Lower lobe of right lung (tissue), 2 donors: ENCODE measurements at regions of chr1 and their contacts with region 1.

Region 1: DNA sequence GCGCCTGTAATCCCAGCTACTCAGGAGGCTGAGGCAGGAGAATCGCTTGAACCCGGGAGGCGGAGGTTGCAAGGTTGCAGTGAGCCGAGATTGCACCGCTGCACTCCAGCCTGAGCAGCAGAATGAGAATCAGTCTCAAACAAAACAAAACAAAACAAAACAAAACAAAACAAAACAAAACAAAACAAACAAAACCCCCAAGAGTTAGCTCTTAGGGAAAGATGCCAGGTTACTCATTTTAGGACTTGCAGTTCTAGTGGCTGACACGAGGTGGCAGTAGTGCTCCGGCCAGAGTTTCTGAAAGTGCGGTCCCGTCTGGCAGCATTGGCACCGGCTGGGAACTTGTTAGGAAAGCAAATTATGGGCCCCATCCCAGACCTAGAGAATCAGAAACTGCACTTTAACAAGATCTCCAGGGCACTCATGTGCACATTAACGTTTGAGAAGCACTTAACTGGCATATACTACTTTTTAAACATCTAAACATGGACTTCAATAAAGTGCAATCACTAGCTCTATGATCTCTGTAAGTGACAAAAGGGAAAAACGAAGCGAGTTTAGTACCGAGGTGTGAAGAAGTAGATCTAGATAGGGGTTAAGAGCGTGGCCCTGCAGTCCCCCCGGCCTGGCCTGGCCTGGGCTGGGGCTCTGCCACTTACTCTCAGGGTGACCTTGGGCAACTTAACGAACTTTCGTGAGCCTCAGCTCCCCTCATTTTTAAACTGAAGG is 41.9 kb upstream of the TNFRSF1B start:
- DNase-seq: peak; percentile 85
- ATAC-seq: peak; percentile 88 to 91
- H3K4me3 ChIP-seq: no peak overlapping the region
- H3K27ac ChIP-seq: peak overlapping the region; percentile 56
- H3K4me1 ChIP-seq: peaks cover 15% of the 10 kb centered on the region
- H3K27me3 ChIP-seq: peaks cover 6% of the 10 kb centered on the region
- CTCF ChIP-seq: peak; percentile 97

Region 2: GRCh38 chr1:12001249-12001917 is 123.5 kb before region 1 on chr1:
- intact Hi-C with region 1: no loop called
- DNase-seq: no peak
- ATAC-seq: peak in 1 of 2 donors; percentile 6
- H3K4me3 ChIP-seq: no peak overlapping the region
- H3K27ac ChIP-seq: no peak overlapping the region
- H3K4me1 ChIP-seq: no peaks in the 10 kb centered on the region
- H3K27me3 ChIP-seq: no peaks in the 10 kb centered on the region
- CTCF ChIP-seq: peak; percentile 56

Region 3: DNA sequence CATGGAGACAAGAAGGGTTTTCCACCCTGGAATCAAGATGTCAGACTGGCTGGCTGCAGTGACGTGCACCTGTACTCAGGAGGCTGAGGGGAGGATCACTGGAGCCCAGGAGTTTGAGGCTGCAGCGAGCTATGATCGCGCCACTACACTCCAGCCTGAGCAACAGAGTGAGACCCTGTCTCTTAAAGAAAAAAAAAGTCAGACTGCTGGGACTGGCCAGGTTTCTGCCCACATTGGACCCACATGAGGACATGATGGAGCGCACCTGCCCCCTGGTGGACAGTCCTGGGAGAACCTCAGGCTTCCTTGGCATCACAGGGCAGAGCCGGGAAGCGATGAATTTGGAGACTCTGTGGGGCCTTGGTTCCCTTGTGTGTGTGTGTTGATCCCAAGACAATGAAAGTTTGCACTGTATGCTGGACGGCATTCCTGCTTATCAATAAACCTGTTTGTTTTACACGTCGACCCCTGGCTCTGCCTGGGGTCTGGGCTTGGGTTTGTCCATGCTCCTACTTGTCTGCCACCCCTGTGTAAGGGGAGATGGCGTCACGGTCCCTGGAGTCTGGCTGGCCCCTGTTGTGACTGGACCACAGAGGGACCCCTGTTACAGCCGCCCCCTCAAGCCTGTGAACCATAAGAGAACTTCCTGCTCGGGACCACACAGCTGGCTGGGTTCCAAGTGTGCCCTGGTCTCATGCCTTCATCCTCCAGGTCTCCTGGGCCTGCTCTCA is 84.1 kb after region 1 on chr1:
- intact Hi-C with region 1: loop called (anchors 5 kb)
- DNase-seq: peak; percentile 86
- ATAC-seq: peak; percentile 90 to 92
- H3K4me3 ChIP-seq: no peak overlapping the region
- H3K27ac ChIP-seq: no peak overlapping the region
- H3K4me1 ChIP-seq: peaks cover 18% of the 10 kb centered on the region
- H3K27me3 ChIP-seq: no peaks in the 10 kb centered on the region
- CTCF ChIP-seq: peak; percentile 97